ENCODE measurements at regions of chr5 and their contacts with region 1.

Region 1: GRCh38 chr5:60482301-60482700 is 217.7 kb downstream of the DEPDC1B start:
- DNase-seq: no peak
- H3K4me3 ChIP-seq: no peak overlapping the region
- H3K27ac ChIP-seq: no peak overlapping the region
- H3K4me1 ChIP-seq: peaks cover 4% of the 10 kb centered on the region; the same call in 1 of the 2 replicates
- H3K27me3 ChIP-seq: no peaks in the 10 kb centered on the region
- CTCF ChIP-seq: no peak

Region 2: GRCh38 chr5:60395712-60396329 is 86.5 kb before region 1 on chr5:
- CTCF ChIA-PET with region 1: no interaction called
- POLR2A ChIA-PET with region 1: interaction called, 16 read pairs
- intact Hi-C with region 1: no loop called
- DNase-seq: no peak
- H3K4me3 ChIP-seq: no peak overlapping the region
- H3K27ac ChIP-seq: no peak overlapping the region
- H3K4me1 ChIP-seq: no peaks in the 10 kb centered on the region
- H3K27me3 ChIP-seq: no peaks in the 10 kb centered on the region
- CTCF ChIP-seq: no peak

Region 3: DNA sequence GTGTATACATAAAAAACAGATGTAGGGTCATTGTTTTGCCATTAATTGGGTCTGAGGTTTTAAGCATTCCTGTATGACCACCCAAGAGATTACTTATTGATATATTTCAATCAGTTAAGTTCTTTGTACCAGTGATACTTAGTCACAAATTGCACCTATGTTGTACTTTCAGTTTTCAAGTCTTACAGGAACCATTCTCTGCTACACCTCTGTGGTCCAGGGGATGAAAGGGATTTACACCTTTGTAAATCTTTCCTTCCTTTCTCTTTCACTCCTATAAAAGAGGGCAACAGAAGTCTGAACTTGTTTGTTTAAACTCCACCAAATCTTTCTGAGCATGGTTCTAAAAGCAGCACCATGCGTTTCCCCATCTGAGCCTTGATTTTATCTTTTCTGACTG is 131.5 kb after region 1 on chr5:
- CTCF ChIA-PET with region 1: no interaction called
- POLR2A ChIA-PET with region 1: no interaction called
- intact Hi-C with region 1: no loop called
- DNase-seq: no peak
- H3K4me3 ChIP-seq: no peak overlapping the region
- H3K27ac ChIP-seq: no peak overlapping the region
- H3K4me1 ChIP-seq: no peaks in the 10 kb centered on the region
- H3K27me3 ChIP-seq: no peaks in the 10 kb centered on the region
- CTCF ChIP-seq: no peak